A673 (cell line): ENCODE measurements at regions of chr12 and their contacts with region 1.

Region 1: GRCh38 chr12:53984901-53985709 is at the start of gene HOXC10:
- DNase-seq: peak; percentile 99
- H3K4me3 ChIP-seq: peak within 1 kb of the TSS; percentile 72
- H3K27ac ChIP-seq: peak within 1 kb of the TSS; percentile 81
- H3K4me1 ChIP-seq: peaks cover 43% of the 10 kb centered on the region
- H3K27me3 ChIP-seq: no peaks in the 10 kb centered on the region
- CTCF ChIP-seq: peak; percentile 80
- total RNA-seq, gene HOXC10: 27.8 and 30.4 TPM in 2 replicates

Region 2: DNA sequence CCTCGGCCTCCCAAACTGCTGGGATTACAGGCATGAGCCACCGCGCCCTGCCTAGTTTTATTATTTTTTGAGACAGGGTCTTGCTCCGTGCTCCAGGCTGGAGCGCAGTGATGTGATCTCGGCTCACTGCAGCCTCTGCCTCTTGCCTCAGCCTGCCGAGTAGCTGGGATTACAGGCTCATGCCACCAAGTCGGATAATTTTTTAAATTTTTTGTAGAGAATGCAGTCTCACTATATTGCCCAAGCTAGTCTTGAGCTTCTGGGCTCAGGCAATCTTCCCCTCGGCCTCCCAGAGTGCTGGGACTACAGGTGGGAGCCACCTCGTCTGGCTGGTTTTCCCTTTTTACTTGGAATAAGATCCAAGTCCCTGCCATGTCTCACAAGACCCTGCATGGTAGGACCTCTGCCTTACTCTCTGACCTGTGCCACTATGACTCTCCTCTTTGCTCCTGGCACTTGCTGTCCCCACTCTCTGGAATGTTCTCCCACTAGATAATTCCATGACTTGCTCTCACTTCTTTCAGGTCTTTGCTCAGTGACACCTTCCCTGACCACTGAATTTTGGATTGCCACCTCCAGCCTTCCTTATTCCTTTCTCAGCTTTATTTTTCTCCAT is 745.4 kb before region 1 on chr12:
- CTCF ChIA-PET with region 1: no interaction called
- POLR2A ChIA-PET with region 1: interaction called, 11 read pairs
- intact Hi-C with region 1: no loop called
- DNase-seq: no peak
- H3K4me3 ChIP-seq: no peak overlapping the region
- H3K27ac ChIP-seq: no peak overlapping the region
- H3K4me1 ChIP-seq: peaks cover under 1% of the 10 kb centered on the region
- H3K27me3 ChIP-seq: no peaks in the 10 kb centered on the region
- CTCF ChIP-seq: no peak

Region 3: GRCh38 chr12:53739214-53740129 is 245.6 kb before region 1 on chr12:
- CTCF ChIA-PET with region 1: interaction called, 17 read pairs
- POLR2A ChIA-PET with region 1: no interaction called
- intact Hi-C with region 1: no loop called
- DNase-seq: peak; percentile 70
- H3K4me3 ChIP-seq: peak overlapping the region; percentile 29
- H3K27ac ChIP-seq: no peak overlapping the region
- H3K4me1 ChIP-seq: peaks cover 30% of the 10 kb centered on the region
- H3K27me3 ChIP-seq: peaks cover 3% of the 10 kb centered on the region
- CTCF ChIP-seq: no peak

Region 4: DNA sequence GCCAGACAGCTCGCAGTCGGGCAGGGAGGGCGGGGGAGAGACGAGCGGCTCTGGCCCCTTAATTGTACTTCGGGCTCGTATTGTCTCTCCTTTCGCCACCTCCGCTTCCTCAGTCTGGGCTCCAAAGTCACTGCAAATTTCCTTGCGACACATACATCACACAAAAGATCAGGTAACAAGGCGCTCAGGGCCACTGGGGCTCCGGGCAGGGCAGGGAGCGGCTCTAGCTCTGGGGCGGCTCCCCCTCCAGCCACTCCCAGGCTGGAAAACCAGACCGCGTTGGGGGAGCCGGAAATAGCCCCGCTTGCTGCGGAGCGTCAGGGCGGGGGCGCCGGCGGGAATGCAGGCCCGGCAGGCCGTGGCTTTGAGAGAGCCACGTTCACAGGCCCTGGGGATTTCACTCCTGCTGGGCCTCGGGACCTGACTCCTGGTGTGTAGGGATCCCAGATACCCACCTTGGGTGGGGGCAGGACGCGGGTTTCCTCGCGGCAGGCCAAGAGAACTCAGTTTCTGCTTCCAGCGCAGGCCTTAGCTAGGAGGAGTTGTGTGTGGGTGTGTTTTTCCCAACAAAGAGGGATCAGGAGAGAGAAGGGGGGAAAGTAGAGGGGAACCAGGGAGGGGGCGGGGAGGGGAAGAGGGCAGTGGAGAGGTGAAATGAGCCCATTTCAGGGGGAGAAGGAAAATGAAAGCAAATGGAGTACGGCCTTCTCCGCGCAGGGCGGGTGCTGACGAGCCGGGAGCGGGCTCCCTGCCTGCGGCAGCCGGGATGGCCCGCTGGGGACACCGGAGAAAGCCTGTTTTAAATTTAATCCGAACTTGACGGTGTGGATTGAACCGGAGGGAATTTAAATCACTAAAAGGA is 10.5 kb after region 1 on chr12:
- CTCF ChIA-PET with region 1: interaction called, 13 read pairs
- POLR2A ChIA-PET with region 1: interaction called, 9 read pairs
- intact Hi-C with region 1: no loop called
- DNase-seq: peak; percentile 82
- H3K4me3 ChIP-seq: peak overlapping the region; percentile 70
- H3K27ac ChIP-seq: peak overlapping the region; percentile 98
- H3K4me1 ChIP-seq: peaks cover 75% of the 10 kb centered on the region
- H3K27me3 ChIP-seq: no peaks in the 10 kb centered on the region
- CTCF ChIP-seq: no peak

Region 5: DNA sequence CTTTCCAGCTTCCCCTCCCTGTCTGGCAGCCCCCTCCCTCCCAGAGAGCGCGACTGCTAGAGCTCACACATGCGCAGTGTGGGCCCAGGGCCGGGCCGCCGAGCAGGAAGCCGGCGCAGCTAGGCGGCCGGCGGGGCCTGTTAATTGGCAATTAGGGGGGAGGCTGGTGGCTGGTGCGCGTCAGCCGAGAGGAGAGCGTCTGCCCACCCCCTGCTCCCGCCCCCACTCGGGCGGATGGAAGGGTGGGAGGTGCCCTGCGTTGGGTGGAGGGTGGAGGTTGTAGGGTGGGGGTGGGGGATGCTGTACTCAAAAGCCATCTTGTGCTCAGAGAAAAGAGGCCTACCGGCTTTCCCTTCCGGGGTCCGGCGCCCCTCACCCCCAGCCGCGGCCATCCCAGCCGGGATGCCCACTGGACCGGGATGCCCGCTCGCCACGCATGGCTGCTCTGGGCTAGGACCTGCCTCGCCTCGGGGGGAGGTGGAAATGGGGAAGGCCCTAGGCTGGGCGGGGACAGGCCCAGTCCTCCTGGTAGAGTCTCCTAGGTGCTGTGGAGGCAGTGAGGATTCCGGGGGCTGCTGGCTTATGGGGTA is 32.9 kb after region 1 on chr12:
- CTCF ChIA-PET with region 1: interaction called, 10 read pairs
- POLR2A ChIA-PET with region 1: interaction called, 5 read pairs
- intact Hi-C with region 1: no loop called
- DNase-seq: peak; percentile 99
- H3K4me3 ChIP-seq: peak overlapping the region; percentile 68
- H3K27ac ChIP-seq: peak overlapping the region; percentile 97
- H3K4me1 ChIP-seq: peaks cover 59% of the 10 kb centered on the region
- H3K27me3 ChIP-seq: no peaks in the 10 kb centered on the region
- CTCF ChIP-seq: no peak

Region 6: DNA sequence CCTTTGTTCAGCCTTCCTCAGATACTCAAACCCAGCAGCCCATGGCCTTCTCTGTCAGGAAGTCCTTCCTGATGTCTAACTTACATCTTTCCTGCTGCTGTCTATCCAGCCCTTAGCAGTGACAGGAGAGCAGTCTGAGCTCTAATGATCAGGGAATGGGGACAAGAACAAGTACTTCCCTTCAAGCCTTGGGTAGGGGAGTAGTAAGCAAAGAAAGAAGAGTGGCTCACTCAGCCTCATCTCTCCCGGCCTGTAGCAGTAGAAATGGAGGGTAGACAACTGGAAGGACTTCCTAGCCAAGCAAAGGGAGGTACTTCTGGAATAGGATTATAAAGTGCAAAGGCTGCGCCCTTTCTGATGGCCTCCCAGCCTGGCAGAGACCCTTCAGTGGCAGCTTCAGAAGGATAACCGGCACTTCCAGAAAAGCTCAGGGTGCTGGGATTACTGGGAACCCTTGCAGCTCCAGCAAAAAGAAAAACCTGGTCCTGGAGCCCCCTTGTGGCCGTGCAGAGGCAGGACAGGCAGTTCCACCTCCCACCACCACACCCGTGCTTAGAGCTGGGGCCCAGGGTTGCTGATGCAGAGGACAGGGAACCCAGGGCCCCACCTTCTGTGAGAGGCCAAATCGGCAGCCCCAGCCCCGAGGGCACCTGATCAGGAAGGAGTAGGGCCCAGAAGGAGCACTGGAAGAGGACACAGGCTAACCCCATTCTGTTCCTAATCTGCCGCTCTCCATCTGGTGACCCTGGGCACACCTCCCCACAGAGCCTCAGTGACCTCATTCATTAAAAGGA is 216.1 kb after region 1 on chr12:
- CTCF ChIA-PET with region 1: interaction called, 32 read pairs
- POLR2A ChIA-PET with region 1: interaction called, 3 read pairs
- intact Hi-C with region 1: loop called (anchors 2 kb)
- DNase-seq: peak; percentile 86
- H3K4me3 ChIP-seq: no peak overlapping the region
- H3K27ac ChIP-seq: no peak overlapping the region
- H3K4me1 ChIP-seq: peaks cover 16% of the 10 kb centered on the region
- H3K27me3 ChIP-seq: no peaks in the 10 kb centered on the region
- CTCF ChIP-seq: peak; percentile 97

Region 7: DNA sequence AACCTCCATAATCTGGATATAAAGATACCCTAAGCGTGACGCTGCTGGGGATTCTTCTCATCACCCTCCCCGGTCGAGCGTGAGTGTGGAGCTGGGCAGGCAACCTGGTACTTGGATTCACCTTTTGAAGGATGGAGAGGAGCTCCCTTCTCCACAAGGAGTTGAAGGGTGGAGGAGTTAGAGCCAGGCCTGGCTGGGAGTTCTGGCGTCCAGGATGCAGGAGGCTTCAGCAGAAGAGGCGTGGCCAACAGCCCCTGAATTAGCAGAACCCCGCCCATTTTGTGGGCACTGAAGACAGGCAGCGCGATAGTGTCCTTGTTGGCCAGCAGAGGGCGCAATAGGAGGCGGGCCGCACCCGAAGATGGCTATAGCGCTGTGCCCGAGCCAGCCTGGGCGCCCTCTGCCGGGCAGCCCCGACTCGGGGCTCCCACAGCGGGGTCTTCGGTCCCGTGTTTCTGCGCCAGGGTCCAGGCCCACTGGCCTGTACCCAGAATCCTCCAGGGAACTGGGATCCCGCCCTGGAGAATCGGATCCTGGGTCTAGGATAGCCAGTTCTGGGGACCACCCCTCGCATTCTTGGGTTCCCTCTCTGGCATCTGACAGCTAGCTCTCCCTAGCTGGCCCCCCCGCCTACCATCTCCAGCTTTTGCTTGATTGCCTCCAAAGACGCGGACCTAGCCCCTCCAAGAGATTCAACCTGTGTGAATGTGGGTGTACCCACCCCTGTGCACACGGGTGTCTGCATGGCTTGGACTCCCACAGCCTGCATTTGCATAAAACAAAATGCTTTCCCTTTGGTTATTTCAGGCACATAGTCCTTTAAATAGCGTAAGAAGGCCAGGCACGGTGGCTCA is 229.7 kb after region 1 on chr12:
- CTCF ChIA-PET with region 1: interaction called, 12 read pairs
- POLR2A ChIA-PET with region 1: interaction called, 15 read pairs
- intact Hi-C with region 1: loop called (anchors 1 kb)
- DNase-seq: peak; percentile 96
- H3K4me3 ChIP-seq: peak overlapping the region; percentile 31
- H3K27ac ChIP-seq: no peak overlapping the region
- H3K4me1 ChIP-seq: peaks cover 19% of the 10 kb centered on the region
- H3K27me3 ChIP-seq: no peaks in the 10 kb centered on the region
- CTCF ChIP-seq: peak; percentile 100